Vagina (tissue), 2 donors: ENCODE measurements at regions of chr1 and their contacts with region 1.

Region 1: DNA sequence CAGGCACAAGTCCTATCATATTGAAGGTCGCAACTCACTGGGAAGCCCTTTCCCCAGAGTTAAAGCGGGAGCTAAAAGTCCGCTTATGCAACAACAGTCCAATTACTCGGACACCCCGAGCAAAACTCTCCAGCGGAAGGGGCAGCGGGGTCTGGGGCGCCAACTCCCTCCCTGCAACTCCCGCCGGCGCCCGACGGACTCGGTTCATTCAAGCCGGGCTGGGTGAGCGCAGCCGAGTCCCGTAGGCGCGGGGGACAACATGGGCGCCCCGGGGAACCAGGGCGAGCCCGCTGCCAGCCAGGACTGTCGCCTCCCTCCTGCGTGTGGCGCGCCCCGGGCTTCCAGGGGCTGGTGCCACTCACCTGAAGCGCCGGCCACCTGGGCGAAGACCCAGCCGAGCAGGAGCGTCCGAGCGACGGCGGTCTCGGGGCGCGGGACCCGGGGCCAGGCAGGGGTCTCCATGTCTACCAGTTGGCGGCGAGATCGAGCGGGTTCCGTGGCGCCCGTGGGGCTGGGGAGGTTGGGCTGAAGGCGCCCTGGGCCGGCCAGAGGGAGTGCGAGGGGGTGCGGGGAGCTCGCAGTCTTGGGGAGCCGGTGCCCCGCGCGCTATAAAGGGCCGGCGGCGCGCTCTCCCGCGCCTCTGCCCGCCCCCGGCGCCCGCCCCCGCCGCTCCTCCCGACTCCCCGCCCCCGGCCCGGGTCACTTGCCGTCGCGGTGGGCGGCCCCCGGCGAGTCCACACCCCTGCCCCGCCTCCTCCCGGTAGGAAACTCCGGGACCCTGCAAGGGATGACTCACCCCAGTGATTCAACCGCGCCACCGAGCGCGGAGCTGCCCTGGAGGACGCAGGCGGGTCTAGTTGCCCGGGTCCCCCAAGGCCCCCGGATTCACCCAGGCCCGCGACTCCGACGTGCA is at the start of gene F3:
- DNase-seq: peak in 1 of 2 donors; percentile 94
- H3K4me3 ChIP-seq: peak within 1 kb of the TSS; percentile 70 to 76
- H3K27ac ChIP-seq: peak within 1 kb of the TSS; percentile 88
- H3K4me1 ChIP-seq: peaks cover 39% of the 10 kb centered on the region
- H3K27me3 ChIP-seq: no peaks in the 10 kb centered on the region
- CTCF ChIP-seq: no peak
- POLR2A ChIP-seq: peak in 1 of 2 donors; percentile 91
- total RNA-seq, gene F3: 63.6 TPM

Region 2: GRCh38 chr1:94305704-94306103 is 235.7 kb before region 1 on chr1:
- intact Hi-C with region 1: no loop called
- DNase-seq: no peak
- H3K4me3 ChIP-seq: no peak overlapping the region
- H3K27ac ChIP-seq: no peak overlapping the region
- H3K4me1 ChIP-seq: peaks cover 4% of the 10 kb centered on the region
- H3K27me3 ChIP-seq: no peaks in the 10 kb centered on the region
- CTCF ChIP-seq: no peak
- POLR2A ChIP-seq: no peak

Region 3: DNA sequence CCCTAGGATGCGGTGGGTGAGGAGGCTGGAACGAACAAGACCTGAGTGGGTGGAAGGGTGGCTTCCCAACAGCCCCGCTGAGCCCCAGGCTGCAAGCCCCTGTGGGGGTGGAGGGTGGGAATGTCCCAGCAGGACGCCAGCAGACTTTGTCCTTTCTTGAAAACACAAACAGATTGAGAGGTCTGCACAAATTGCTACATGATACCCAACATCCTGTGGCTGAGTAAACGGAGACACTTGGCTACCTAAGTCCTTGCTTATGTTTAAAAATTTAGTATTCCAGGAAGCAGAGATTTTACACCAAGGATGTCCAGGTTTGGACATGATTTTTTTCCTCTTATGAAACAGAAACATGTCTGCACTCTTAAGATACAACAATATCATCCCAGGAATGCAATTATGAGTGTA is 11.9 kb after region 1 on chr1:
- intact Hi-C with region 1: no loop called
- DNase-seq: peak in 1 of 2 donors; percentile 64
- H3K4me3 ChIP-seq: no peak overlapping the region
- H3K27ac ChIP-seq: no peak overlapping the region
- H3K4me1 ChIP-seq: peaks cover 27% of the 10 kb centered on the region
- H3K27me3 ChIP-seq: no peaks in the 10 kb centered on the region
- CTCF ChIP-seq: no peak
- POLR2A ChIP-seq: no peak

Region 4: GRCh38 chr1:94698759-94699502 is 157.5 kb after region 1 on chr1:
- intact Hi-C with region 1: loop called (anchors 10 kb)
- DNase-seq: no peak
- H3K4me3 ChIP-seq: no peak overlapping the region
- H3K27ac ChIP-seq: no peak overlapping the region
- H3K4me1 ChIP-seq: no peaks in the 10 kb centered on the region
- H3K27me3 ChIP-seq: no peaks in the 10 kb centered on the region
- CTCF ChIP-seq: no peak
- POLR2A ChIP-seq: no peak